Left lung (tissue), 14 donors: ENCODE measurements at regions of chrX and their contacts with region 1.

Region 1: GRCh38 chrX:48021026-48021900 is 14.5 kb downstream of the SPACA5 start:
- DNase-seq: peak; percentile 74 to 92 (median 80)
- ATAC-seq: peak; percentile 89
- H3K4me3 ChIP-seq: peak overlapping the region; percentile 25 to 44
- H3K27ac ChIP-seq: peak overlapping the region; percentile 83 to 87
- H3K4me1 ChIP-seq: no peaks in the 10 kb centered on the region
- H3K27me3 ChIP-seq: no peaks in the 10 kb centered on the region
- CTCF ChIP-seq: no peak

Region 2: GRCh38 chrX:47836164-47837072 is 184.8 kb before region 1 on chrX and contains the start of gene ZNF81:
- intact Hi-C with region 1: loop called in 1 of 2 experiments (anchors 10 kb)
- DNase-seq: peak; percentile 92 to 97 (median 96)
- ATAC-seq: peak; percentile 98
- H3K4me3 ChIP-seq: peak within 1 kb of the TSS; percentile 30 to 54
- H3K27ac ChIP-seq: peak within 1 kb of the TSS; percentile 34 to 58
- H3K4me1 ChIP-seq: peaks cover 4 to 10% of the 10 kb centered on the region in 2 donors
- H3K27me3 ChIP-seq: no peaks in the 10 kb centered on the region
- CTCF ChIP-seq: no peak
- polyA plus RNA-seq, gene ZNF81: 5.8 to 9.1 (median 6.5) TPM